ENCODE measurements at regions of chr6 and their contacts with region 1.

Region 1: GRCh38 chr6:26122793-26123674 is 35.8 kb downstream of the HFE start:
- DNase-seq: peak; percentile 75 to 98
- ATAC-seq: peak; percentile 54 to 76 (median 63)
- H3K4me3 ChIP-seq: peak overlapping the region; percentile 82
- H3K4me3 Mint-ChIP-seq: peak overlapping the region; percentile 99
- H3K27ac ChIP-seq: peak overlapping the region; percentile 97
- H3K27ac Mint-ChIP-seq: peak overlapping the region; percentile 98 to 100
- H3K4me1 ChIP-seq: peaks cover 26% of the 10 kb centered on the region
- H3K4me1 Mint-ChIP-seq: peaks cover 42 to 52% of the 10 kb centered on the region in 2 donors
- H3K27me3 ChIP-seq: no peaks in the 10 kb centered on the region
- H3K27me3 Mint-ChIP-seq: no peaks in the 10 kb centered on the region
- CTCF ChIP-seq: no peak

Region 2: GRCh38 chr6:25992413-25993037 is 130.5 kb before region 1 on chr6:
- intact Hi-C with region 1: no loop called
- DNase-seq: peak; percentile 95 to 97
- ATAC-seq: peak; percentile 96 to 99 (median 96)
- H3K4me3 ChIP-seq: peak overlapping the region; percentile 82
- H3K4me3 Mint-ChIP-seq: peak overlapping the region; percentile 97
- H3K27ac ChIP-seq: peak overlapping the region; percentile 85
- H3K27ac Mint-ChIP-seq: peak overlapping the region; percentile 93 to 96
- H3K4me1 ChIP-seq: peaks cover 14% of the 10 kb centered on the region
- H3K4me1 Mint-ChIP-seq: peaks cover 23 to 26% of the 10 kb centered on the region in 2 donors
- H3K27me3 ChIP-seq: no peaks in the 10 kb centered on the region
- H3K27me3 Mint-ChIP-seq: no peaks in the 10 kb centered on the region
- CTCF ChIP-seq: peak; percentile 99

Region 3: GRCh38 chr6:26045065-26045927 is 77.7 kb before region 1 on chr6:
- intact Hi-C with region 1: loop called (anchors 1 kb)
- DNase-seq: peak; percentile 64 to 92
- ATAC-seq: peak; percentile 52 to 73 (median 64)
- H3K4me3 ChIP-seq: peak overlapping the region; percentile 64
- H3K4me3 Mint-ChIP-seq: peak overlapping the region; percentile 95
- H3K27ac ChIP-seq: peak overlapping the region; percentile 91
- H3K27ac Mint-ChIP-seq: peak overlapping the region; percentile 97 to 98
- H3K4me1 ChIP-seq: peaks cover 26% of the 10 kb centered on the region
- H3K4me1 Mint-ChIP-seq: peaks cover 25 to 28% of the 10 kb centered on the region in 2 donors
- H3K27me3 ChIP-seq: no peaks in the 10 kb centered on the region
- H3K27me3 Mint-ChIP-seq: no peaks in the 10 kb centered on the region
- CTCF ChIP-seq: no peak

Region 4: DNA sequence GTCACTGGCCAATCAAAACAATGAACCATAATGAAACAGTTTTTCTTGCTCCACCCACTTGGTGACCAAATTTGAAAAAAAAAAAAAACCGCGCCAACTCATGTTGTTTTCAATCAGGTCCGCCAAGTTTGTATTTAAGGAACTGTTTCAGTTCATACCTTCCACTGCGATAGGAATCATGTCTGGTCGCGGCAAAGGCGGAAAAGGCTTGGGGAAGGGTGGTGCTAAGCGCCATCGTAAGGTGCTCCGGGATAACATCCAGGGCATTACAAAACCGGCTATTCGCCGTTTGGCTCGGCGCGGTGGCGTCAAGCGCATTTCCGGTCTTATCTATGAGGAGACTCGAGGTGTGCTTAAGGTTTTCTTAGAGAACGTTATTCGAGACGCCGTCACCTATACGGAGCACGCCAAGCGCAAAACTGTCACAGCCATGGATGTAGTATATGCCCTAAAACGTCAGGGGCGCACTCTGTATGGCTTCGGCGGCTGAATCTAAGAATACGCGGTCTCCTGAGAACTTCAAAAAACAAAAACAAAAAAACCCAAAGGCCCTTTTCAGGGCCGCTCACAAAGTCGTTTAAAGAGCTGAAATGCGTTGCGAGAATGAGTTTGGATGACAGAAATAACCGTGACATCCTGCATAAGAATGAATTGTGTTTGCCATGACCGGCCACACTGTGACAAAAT is 19.1 kb before region 1 on chr6:
- intact Hi-C with region 1: loop called (anchors 1 kb)
- DNase-seq: peak; percentile 86 to 95
- ATAC-seq: peak; percentile 87 to 96 (median 88)
- H3K4me3 ChIP-seq: peak overlapping the region; percentile 41
- H3K4me3 Mint-ChIP-seq: peak overlapping the region; percentile 90
- H3K27ac ChIP-seq: peak overlapping the region; percentile 84
- H3K27ac Mint-ChIP-seq: peak overlapping the region; percentile 98 to 99
- H3K4me1 ChIP-seq: peaks cover 10% of the 10 kb centered on the region
- H3K4me1 Mint-ChIP-seq: peaks cover 18% of the 10 kb centered on the region in 2 donors
- H3K27me3 ChIP-seq: no peaks in the 10 kb centered on the region
- H3K27me3 Mint-ChIP-seq: no peaks in the 10 kb centered on the region
- CTCF ChIP-seq: peak; percentile 41

Region 5: GRCh38 chr6:26172496-26172958 is 49.5 kb after region 1 on chr6:
- intact Hi-C with region 1: no loop called
- DNase-seq: peak; percentile 30 to 76
- ATAC-seq: peak; percentile 49 to 63 (median 53)
- H3K4me3 ChIP-seq: peak overlapping the region; percentile 49
- H3K4me3 Mint-ChIP-seq: peak overlapping the region; percentile 98
- H3K27ac ChIP-seq: peak overlapping the region; percentile 82
- H3K27ac Mint-ChIP-seq: peak overlapping the region; percentile 96 to 98
- H3K4me1 ChIP-seq: peaks cover 15% of the 10 kb centered on the region
- H3K4me1 Mint-ChIP-seq: peaks cover 47 to 54% of the 10 kb centered on the region in 2 donors
- H3K27me3 ChIP-seq: no peaks in the 10 kb centered on the region
- H3K27me3 Mint-ChIP-seq: no peaks in the 10 kb centered on the region
- CTCF ChIP-seq: no peak

Region 6: DNA sequence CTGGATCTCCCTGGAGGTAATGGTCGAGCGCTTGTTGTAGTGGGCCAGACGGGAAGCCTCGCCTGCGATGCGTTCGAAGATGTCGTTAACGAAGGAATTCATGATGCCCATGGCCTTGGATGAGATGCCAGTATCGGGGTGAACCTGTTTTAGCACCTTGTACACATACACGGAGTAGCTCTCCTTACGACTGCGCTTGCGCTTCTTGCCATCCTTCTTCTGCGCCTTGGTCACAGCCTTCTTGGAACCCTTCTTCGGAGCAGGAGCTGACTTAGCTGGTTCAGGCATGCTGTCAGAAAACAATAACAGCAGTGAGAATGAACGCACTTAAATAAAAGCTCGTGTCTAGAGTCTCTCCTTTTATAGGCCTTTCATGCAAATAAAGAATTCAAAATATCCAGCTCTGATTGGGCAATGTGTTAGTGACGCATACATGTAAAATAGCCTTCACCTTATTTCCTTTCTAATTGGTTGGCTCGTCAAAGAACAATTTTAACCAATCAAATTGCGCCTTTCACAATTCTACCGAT is 93.4 kb after region 1 on chr6:
- intact Hi-C with region 1: loop called (anchors 1 kb)
- DNase-seq: peak; percentile 68 to 94
- ATAC-seq: peak; percentile 77 to 92 (median 79)
- H3K4me3 ChIP-seq: peak overlapping the region; percentile 63
- H3K4me3 Mint-ChIP-seq: no peak overlapping the region
- H3K27ac ChIP-seq: peak overlapping the region; percentile 91
- H3K27ac Mint-ChIP-seq: no peak overlapping the region
- H3K4me1 ChIP-seq: peaks cover 27% of the 10 kb centered on the region
- H3K4me1 Mint-ChIP-seq: no peaks in the 10 kb centered on the region
- H3K27me3 ChIP-seq: no peaks in the 10 kb centered on the region
- H3K27me3 Mint-ChIP-seq: no peaks in the 10 kb centered on the region
- CTCF ChIP-seq: no peak

Region 7: GRCh38 chr6:26285143-26286134 is 162.4 kb after region 1 on chr6:
- intact Hi-C with region 1: loop called (anchors 1 kb)
- DNase-seq: peak; percentile 83 to 98
- ATAC-seq: peak; percentile 76 to 93 (median 83)
- H3K4me3 ChIP-seq: peak overlapping the region; percentile 70
- H3K4me3 Mint-ChIP-seq: peak overlapping the region; percentile 95
- H3K27ac ChIP-seq: peak overlapping the region; percentile 97
- H3K27ac Mint-ChIP-seq: peak overlapping the region; percentile 98
- H3K4me1 ChIP-seq: peaks cover 17% of the 10 kb centered on the region
- H3K4me1 Mint-ChIP-seq: peaks cover 34 to 37% of the 10 kb centered on the region in 2 donors
- H3K27me3 ChIP-seq: no peaks in the 10 kb centered on the region
- H3K27me3 Mint-ChIP-seq: peaks cover 3 to 8% of the 10 kb centered on the region in 2 donors
- CTCF ChIP-seq: no peak

Region 8: GRCh38 chr6:27809939-27810767 is 1687.1 kb after region 1 on chr6:
- intact Hi-C with region 1: loop called (anchors 1 kb)
- DNase-seq: peak; percentile 76 to 95
- ATAC-seq: peak; percentile 55 to 71 (median 63)
- H3K4me3 ChIP-seq: peak overlapping the region; percentile 63
- H3K4me3 Mint-ChIP-seq: peak overlapping the region; percentile 95
- H3K27ac ChIP-seq: peak overlapping the region; percentile 88
- H3K27ac Mint-ChIP-seq: peak overlapping the region; percentile 96 to 99
- H3K4me1 ChIP-seq: peaks cover 37% of the 10 kb centered on the region
- H3K4me1 Mint-ChIP-seq: peaks cover 49 to 56% of the 10 kb centered on the region in 2 donors
- H3K27me3 ChIP-seq: no peaks in the 10 kb centered on the region
- H3K27me3 Mint-ChIP-seq: no peaks in the 10 kb centered on the region
- CTCF ChIP-seq: no peak

Measured in natural killer cell (primary cell).